HepG2 (cell line): ENCODE measurements at regions of chr2 and their contacts with region 1.

Region 1: GRCh38 chr2:98835831-98836385 is 100.1 kb downstream of the CRACDL start:
- DNase-seq: no peak
- ATAC-seq: peak; percentile 43
- H3K4me3 ChIP-seq: no peak overlapping the region
- H3K27ac ChIP-seq: no peak overlapping the region
- H3K4me1 ChIP-seq: peaks cover 45% of the 10 kb centered on the region
- H3K27me3 ChIP-seq: no peaks in the 10 kb centered on the region
- CTCF ChIP-seq: no peak
- EP300 ChIP-seq: no peak
- POLR2A ChIP-seq: no peak
- RAD21 ChIP-seq: no peak

Region 2: GRCh38 chr2:98412751-98413458 is 423.0 kb before region 1 on chr2:
- CTCF ChIA-PET with region 1: no interaction called
- POLR2A ChIA-PET with region 1: no interaction called
- in situ Hi-C with region 1: loop called (anchors 25 kb)
- intact Hi-C with region 1: no loop called
- DNase-seq: peak; percentile 77
- ATAC-seq: peak; percentile 91
- H3K4me3 ChIP-seq: no peak overlapping the region
- H3K27ac ChIP-seq: no peak overlapping the region
- H3K4me1 ChIP-seq: peaks cover 10% of the 10 kb centered on the region; the same call in 1 of the 2 replicates
- H3K27me3 ChIP-seq: no peaks in the 10 kb centered on the region; a peak in 1 of 5 replicates
- CTCF ChIP-seq: peak; percentile 83
- EP300 ChIP-seq: no peak
- POLR2A ChIP-seq: no peak
- RAD21 ChIP-seq: peak; percentile 65

Region 3: GRCh38 chr2:98649135-98649991 is 186.5 kb before region 1 on chr2:
- CTCF ChIA-PET with region 1: interaction called, 99 read pairs
- POLR2A ChIA-PET with region 1: interaction called, 5 read pairs
- in situ Hi-C with region 1: loop called (anchors 5 kb)
- intact Hi-C with region 1: loop called (anchors 1 kb)
- DNase-seq: peak; percentile 83
- ATAC-seq: peak; percentile 99
- H3K4me3 ChIP-seq: no peak overlapping the region
- H3K27ac ChIP-seq: no peak overlapping the region
- H3K4me1 ChIP-seq: peaks cover 10% of the 10 kb centered on the region; the same call in 1 of the 2 replicates
- H3K27me3 ChIP-seq: no peaks in the 10 kb centered on the region
- CTCF ChIP-seq: peak; percentile 96
- EP300 ChIP-seq: no peak
- POLR2A ChIP-seq: no peak
- RAD21 ChIP-seq: peak; percentile 98

Region 4: GRCh38 chr2:98654699-98655495 is 181.0 kb before region 1 on chr2:
- CTCF ChIA-PET with region 1: interaction called, 99 read pairs
- POLR2A ChIA-PET with region 1: no interaction called
- in situ Hi-C with region 1: loop called (anchors 5 kb)
- intact Hi-C with region 1: no loop called
- DNase-seq: no peak
- ATAC-seq: no peak
- H3K4me3 ChIP-seq: no peak overlapping the region
- H3K27ac ChIP-seq: no peak overlapping the region
- H3K4me1 ChIP-seq: peaks cover under 1% of the 10 kb centered on the region; the same call in 1 of the 2 replicates
- H3K27me3 ChIP-seq: no peaks in the 10 kb centered on the region
- CTCF ChIP-seq: no peak
- EP300 ChIP-seq: no peak
- POLR2A ChIP-seq: no peak
- RAD21 ChIP-seq: no peak

Region 5: DNA sequence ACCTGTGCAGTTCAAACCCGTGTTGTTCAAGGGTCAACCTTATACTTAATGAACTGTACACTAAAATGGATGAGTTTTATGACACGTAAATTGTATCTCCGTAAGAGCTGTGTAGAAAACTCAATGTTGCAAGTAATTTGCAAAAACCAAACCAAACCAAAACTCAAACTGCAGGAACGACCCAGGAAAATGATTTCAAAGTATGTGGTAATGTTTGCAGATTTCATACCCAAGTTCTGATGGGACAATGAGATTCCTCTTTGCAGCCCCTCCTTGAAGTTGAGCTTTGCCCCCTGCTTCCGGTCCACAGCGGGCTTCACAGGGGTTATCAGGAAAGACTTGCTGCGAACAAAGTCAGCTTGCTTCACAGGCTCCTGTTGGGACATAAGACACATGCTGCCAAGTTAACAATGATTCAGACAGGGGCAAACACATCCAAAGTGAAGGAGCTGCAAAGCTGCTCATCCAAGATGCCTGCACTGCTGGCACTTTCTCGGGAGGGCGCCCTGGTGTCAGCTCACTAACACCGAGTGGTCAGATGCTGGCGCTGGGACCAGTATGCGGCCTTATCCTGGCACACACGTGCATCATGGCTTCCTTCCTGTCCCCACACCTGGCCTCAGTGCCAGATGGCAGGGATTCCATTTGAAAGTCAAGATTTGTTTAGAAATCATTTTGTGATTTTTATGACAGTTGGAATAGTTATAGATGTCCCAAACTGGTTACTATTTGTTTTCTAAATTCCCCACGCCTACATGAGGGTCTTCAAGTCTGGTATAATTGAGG is 39.8 kb before region 1 on chr2:
- CTCF ChIA-PET with region 1: interaction called, 3 read pairs
- POLR2A ChIA-PET with region 1: interaction called, 6 read pairs
- in situ Hi-C with region 1: no loop called
- intact Hi-C with region 1: loop called (anchors 2 kb)
- DNase-seq: peak; percentile 100
- ATAC-seq: peak; percentile 89
- H3K4me3 ChIP-seq: peak overlapping the region; percentile 4 to 53 (median 28); a peak in 4 of 6 replicates
- H3K27ac ChIP-seq: peak overlapping the region; percentile 94
- H3K4me1 ChIP-seq: peaks cover 80% of the 10 kb centered on the region
- H3K27me3 ChIP-seq: no peaks in the 10 kb centered on the region
- CTCF ChIP-seq: peak; percentile 69
- EP300 ChIP-seq: peak; percentile 96 to 99
- POLR2A ChIP-seq: peak; percentile 72 to 79
- RAD21 ChIP-seq: peak; percentile 76

Region 6: DNA sequence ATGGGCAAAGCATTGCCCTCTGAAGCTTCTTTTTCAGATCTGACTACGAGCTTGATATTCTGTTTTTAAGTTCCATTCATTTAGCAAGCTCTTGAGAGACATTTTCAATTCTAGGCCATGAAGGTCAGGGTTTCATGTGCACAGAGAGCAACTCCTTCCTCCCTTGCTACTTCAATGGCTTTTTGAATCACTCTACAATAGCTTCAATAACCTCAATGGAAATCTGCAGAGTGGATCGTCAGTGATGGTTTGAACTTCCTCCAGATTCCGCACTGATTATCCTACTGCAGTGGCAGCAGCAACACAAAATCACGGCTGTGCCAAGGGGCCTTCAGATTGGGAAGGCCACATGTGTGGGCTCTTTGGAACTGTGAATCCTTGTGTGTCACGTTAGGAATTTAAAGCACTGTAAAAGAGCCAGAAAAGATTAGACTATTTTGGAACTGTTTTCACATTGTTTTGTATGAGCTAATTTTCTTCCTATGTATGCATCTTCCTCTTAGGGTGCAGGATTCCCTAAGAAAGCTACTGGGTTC is 16.6 kb before region 1 on chr2:
- CTCF ChIA-PET with region 1: no interaction called
- POLR2A ChIA-PET with region 1: no interaction called
- in situ Hi-C with region 1: no loop called
- intact Hi-C with region 1: no loop called
- DNase-seq: no peak
- ATAC-seq: no peak
- H3K4me3 ChIP-seq: no peak overlapping the region
- H3K27ac ChIP-seq: no peak overlapping the region
- H3K4me1 ChIP-seq: peaks cover 12% of the 10 kb centered on the region
- H3K27me3 ChIP-seq: no peaks in the 10 kb centered on the region
- CTCF ChIP-seq: no peak
- EP300 ChIP-seq: no peak
- POLR2A ChIP-seq: no peak
- RAD21 ChIP-seq: no peak

Region 7: DNA sequence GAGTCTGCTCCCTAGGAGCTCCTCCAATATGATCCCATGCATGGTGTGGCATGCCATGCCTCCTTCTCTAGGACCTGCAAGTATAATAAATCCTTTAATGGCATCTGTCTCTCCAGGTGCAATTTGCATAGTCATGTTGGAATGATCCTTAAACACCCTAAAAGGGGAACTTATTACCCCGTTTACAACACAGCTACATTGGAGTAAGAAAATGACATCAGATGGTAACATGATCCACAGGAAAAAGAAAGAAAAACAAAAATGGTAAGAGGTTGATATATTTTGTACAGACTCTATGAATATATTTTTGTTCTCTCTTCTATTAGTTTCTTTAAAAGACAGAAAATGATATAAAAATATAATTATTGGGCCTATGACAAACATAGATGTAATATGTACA is 21.1 kb after region 1 on chr2:
- CTCF ChIA-PET with region 1: no interaction called
- POLR2A ChIA-PET with region 1: no interaction called
- in situ Hi-C with region 1: no loop called
- intact Hi-C with region 1: no loop called
- DNase-seq: no peak
- ATAC-seq: no peak
- H3K4me3 ChIP-seq: no peak overlapping the region
- H3K27ac ChIP-seq: no peak overlapping the region
- H3K4me1 ChIP-seq: no peaks in the 10 kb centered on the region
- H3K27me3 ChIP-seq: no peaks in the 10 kb centered on the region
- CTCF ChIP-seq: no peak
- EP300 ChIP-seq: no peak
- POLR2A ChIP-seq: no peak
- RAD21 ChIP-seq: no peak

Region 8: DNA sequence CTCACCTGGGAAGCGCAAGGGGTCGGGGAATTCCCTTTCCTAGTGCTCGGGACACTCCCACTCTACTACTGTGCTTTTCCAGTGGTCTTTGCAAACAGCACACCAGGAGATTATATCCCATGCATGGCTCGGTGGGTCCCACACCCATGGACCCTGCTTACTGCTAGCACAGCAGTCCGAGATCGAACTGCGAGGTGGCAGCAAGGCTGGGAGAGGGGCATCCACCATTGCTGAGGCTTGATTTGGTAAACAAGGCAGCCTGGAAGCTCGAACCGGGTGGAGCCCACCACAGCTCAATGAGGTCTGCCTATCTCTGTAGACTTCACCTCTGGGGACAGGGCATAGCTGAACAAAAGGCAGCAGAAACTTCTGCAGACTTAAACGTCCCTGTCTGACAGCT is 164.8 kb after region 1 on chr2:
- CTCF ChIA-PET with region 1: no interaction called
- POLR2A ChIA-PET with region 1: no interaction called
- in situ Hi-C with region 1: no loop called
- intact Hi-C with region 1: no loop called
- DNase-seq: no peak
- ATAC-seq: no peak
- H3K4me3 ChIP-seq: no peak overlapping the region
- H3K27ac ChIP-seq: no peak overlapping the region
- H3K4me1 ChIP-seq: no peaks in the 10 kb centered on the region
- H3K27me3 ChIP-seq: no peaks in the 10 kb centered on the region
- CTCF ChIP-seq: no peak
- EP300 ChIP-seq: no peak
- POLR2A ChIP-seq: no peak
- RAD21 ChIP-seq: no peak